Motor neuron (in vitro differentiated cells): ENCODE measurements at regions of chr5 and their contacts with region 1.

Region 1: DNA sequence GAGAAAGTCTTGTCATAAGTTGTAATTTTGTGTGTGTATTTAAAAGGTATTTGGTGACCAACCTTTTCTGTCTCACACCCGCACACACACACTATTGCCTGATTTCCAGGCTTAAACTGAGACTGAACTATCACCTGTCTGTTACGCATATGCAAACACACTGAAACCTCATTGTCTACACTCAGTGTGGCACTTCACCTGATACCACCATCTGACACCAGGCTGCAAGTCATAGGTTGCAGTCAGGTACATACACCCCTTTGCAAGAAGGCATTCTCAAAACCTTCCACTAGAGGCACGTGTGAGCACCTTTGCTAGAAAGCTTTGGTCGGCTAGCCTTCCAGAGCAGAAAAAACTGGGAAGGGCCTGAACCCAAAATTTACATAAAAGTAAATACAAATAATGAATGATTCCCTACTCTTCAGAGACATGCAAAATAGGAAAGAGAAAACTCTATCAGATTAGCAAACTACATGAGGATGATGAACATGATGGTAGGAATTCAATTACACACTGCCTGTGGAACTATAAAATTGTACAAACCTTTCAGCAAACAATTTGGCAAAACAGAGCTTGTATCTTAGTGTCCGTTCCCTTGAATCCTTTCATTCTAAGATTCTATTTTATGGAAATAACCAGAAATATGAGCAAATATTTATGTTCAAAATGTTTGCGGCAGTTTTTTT is 5.9 kb upstream of the FOXD1 start:
- ATAC-seq: peak; percentile 45 to 87 (median 58)
- H3K4me3 ChIP-seq: no peak overlapping the region
- H3K27ac ChIP-seq: no peak overlapping the region
- H3K4me1 ChIP-seq: no peaks in the 10 kb centered on the region

Region 2: DNA sequence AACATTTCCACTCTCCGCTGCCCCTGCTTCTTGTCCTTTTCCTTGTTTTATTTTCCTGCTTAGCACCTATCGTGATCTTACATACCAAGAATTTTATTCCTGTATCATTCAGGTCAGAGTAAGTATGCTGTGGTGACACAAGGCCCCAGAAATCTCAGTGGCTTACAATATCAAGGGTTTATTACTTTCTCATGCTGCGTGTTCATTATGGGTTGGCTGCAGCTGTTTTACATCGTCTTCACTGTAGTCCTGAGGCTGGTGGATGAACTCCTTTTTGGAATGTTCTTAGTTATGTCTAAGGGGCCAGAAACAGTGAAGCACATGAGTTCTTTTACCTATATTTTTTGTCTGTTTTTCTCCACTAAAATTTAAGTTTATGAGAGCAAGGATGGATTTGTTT is 447.4 kb before region 1 on chr5:
- in situ Hi-C with region 1: no loop called
- ATAC-seq: no peak
- H3K4me3 ChIP-seq: no peak overlapping the region
- H3K27ac ChIP-seq: no peak overlapping the region
- H3K4me1 ChIP-seq: peaks cover 0 to 2% of the 10 kb centered on the region in 2 donors

Region 3: GRCh38 chr5:73215891-73216610 is 238.4 kb before region 1 on chr5:
- in situ Hi-C with region 1: loop called in 5 of 9 experiments (anchors 25 kb)
- ATAC-seq: peak; percentile 98 to 100 (median 100)
- H3K4me3 ChIP-seq: peak overlapping the region; percentile 37 to 55 (median 43)
- H3K27ac ChIP-seq: no peak overlapping the region
- H3K4me1 ChIP-seq: peaks cover 0 to 9% of the 10 kb centered on the region in 2 donors